Endothelial cell of umbilical vein (primary cell): ENCODE measurements at regions of chr1 and their contacts with region 1.

Region 1: DNA sequence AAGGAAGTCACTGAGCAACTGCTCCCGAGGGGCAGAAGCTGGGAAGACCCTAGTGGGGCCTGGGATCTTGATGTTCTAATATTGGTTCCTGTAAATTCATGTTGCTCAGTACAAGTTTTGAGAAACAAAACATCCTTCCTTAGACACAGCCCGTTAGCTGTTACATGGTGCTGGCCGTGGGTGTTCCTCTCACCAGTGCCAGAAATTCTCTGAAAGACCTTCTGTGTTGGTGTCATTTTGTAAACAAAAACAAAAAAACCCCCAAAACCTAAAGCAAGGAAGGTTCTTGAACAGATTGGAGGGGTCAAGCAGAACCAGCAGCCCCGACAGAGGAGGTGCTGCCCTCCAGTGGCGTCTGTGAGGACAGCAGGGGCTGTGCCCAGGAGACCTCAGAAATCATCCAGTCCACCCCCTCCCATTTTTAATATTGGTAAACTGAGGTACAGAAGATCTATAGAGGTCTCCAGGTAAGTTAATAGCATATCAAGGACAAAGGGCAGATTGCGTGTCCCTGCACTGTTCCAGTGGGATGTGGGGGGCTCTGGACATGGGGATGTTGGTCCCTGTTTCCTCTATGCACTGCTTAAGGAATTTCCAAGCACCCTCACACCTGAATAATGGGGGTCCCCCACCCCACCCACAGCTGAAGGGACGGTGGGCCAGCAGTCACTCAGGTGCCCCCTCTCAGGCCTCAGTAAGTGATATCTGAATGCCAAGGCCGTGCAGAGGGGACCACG is 38.2 kb downstream of the SLC2A7 start:
- DNase-seq: peak; percentile 64
- H3K4me3 ChIP-seq: no peak overlapping the region
- H3K27ac ChIP-seq: peak overlapping the region; percentile 50
- H3K4me1 ChIP-seq: peaks cover 16% of the 10 kb centered on the region
- H3K27me3 ChIP-seq: no peaks in the 10 kb centered on the region
- CTCF ChIP-seq: peak; percentile 88 to 93
- POLR2A ChIP-seq: no peak

Region 2: DNA sequence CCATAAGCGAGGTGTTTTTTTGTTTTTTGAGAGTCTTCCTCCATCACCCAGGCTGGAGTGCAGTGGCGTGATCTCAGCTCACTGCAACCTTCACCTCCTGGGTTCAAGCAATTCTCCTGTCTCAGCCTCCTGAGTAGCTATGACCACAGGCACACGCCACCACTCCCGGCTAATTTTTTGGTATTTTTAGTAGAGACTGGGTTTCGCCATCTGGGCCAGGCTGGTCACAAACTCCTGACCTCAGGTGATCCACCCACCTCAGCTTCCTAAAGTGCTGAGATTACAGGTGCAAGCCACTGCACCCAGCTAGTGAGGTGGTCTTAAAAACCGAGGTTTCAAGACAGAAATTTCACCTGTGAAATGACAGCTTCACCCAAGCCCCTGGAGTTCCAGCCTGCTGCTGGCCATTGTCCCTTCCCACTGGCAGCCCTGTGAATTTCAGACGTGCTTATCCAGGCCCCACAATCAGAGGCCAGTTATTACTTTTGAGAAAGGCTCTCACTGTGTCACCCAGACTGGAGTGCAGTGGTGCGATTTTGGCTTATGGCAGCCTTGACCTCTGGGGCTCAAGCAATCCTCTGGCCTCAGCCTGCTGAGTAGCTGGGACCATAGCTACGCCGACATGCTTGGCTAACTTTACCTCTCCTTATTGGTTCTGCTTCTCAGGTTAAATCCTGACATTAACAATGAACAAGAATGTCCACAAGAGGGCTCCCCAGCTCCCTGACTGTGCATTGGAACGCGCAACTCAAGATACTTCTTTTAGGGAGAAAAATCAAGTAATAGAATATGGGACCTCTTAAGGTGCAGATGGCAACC is 129.0 kb before region 1 on chr1:
- CTCF ChIA-PET with region 1: interaction called, 9 read pairs
- POLR2A ChIA-PET with region 1: no interaction called
- dilution Hi-C with region 1: no loop called
- intact Hi-C with region 1: loop called (anchors 1 kb)
- DNase-seq: peak; percentile 83
- H3K4me3 ChIP-seq: no peak overlapping the region
- H3K27ac ChIP-seq: peak overlapping the region; percentile 80
- H3K4me1 ChIP-seq: peaks cover 36% of the 10 kb centered on the region
- H3K27me3 ChIP-seq: no peaks in the 10 kb centered on the region
- CTCF ChIP-seq: peak; percentile 65
- POLR2A ChIP-seq: peak; percentile 33

Region 3: GRCh38 chr1:8910914-8911313 is 77.1 kb before region 1 on chr1:
- CTCF ChIA-PET with region 1: interaction called, 19 read pairs
- POLR2A ChIA-PET with region 1: interaction called, 4 read pairs
- dilution Hi-C with region 1: no loop called
- intact Hi-C with region 1: no loop called
- DNase-seq: no peak
- H3K4me3 ChIP-seq: no peak overlapping the region
- H3K27ac ChIP-seq: no peak overlapping the region
- H3K4me1 ChIP-seq: no peaks in the 10 kb centered on the region
- H3K27me3 ChIP-seq: peaks cover 0 to 4% of the 10 kb centered on the region in 2 experiments
- CTCF ChIP-seq: no peak
- POLR2A ChIP-seq: no peak

Region 4: GRCh38 chr1:8947127-8947691 is 40.8 kb before region 1 on chr1:
- CTCF ChIA-PET with region 1: interaction called, 9 read pairs
- POLR2A ChIA-PET with region 1: no interaction called
- dilution Hi-C with region 1: no loop called
- intact Hi-C with region 1: loop called (anchors 1 kb)
- DNase-seq: peak; percentile 52
- H3K4me3 ChIP-seq: no peak overlapping the region
- H3K27ac ChIP-seq: peak overlapping the region; percentile 46
- H3K4me1 ChIP-seq: peaks cover 14% of the 10 kb centered on the region
- H3K27me3 ChIP-seq: no peaks in the 10 kb centered on the region
- CTCF ChIP-seq: no peak
- POLR2A ChIP-seq: no peak

Region 5: GRCh38 chr1:9101510-9102146 is 113.6 kb after region 1 on chr1:
- CTCF ChIA-PET with region 1: interaction called, 13 read pairs
- POLR2A ChIA-PET with region 1: no interaction called
- dilution Hi-C with region 1: no loop called
- intact Hi-C with region 1: no loop called
- DNase-seq: peak; percentile 51
- H3K4me3 ChIP-seq: no peak overlapping the region
- H3K27ac ChIP-seq: no peak overlapping the region
- H3K4me1 ChIP-seq: no peaks in the 10 kb centered on the region
- H3K27me3 ChIP-seq: no peaks in the 10 kb centered on the region
- CTCF ChIP-seq: peak; percentile 64 to 80
- POLR2A ChIP-seq: no peak